Right lobe of liver (tissue), 6 donors: ENCODE measurements at regions of chr17 and their contacts with region 1.

Region 1: DNA sequence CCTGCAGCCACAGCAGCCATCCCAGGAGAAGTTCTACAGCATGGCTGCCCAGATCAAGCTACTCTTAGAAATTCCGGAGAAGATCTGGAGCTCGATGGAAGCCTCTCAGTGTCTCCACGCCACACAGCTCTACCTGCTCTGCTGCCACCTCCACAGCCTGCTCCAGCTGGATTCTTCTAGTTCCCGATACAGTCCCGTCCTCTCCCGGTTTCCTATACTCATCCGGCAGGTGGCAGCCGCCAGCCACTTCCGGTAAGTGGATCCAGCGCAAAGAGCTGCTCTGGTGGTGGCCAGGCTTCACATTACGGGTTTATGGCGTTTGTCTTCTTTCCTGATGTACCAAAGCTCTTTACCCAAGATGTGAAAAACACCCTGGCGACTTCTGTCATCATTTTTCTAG is 3.6 kb downstream of the COG1 start:
- DNase-seq: peak; percentile 49 to 71 (median 65)
- ATAC-seq: peak; percentile 14 to 37 (median 30)
- H3K4me3 ChIP-seq: no peak overlapping the region
- H3K27ac ChIP-seq: peak overlapping the region in 1 of 3 donors; percentile 19
- H3K4me1 ChIP-seq: peaks cover 0 to 25% (median 11%) of the 10 kb centered on the region in 4 donors
- H3K27me3 ChIP-seq: no peaks in the 10 kb centered on the region
- CTCF ChIP-seq: peak; percentile 22 to 45 (median 26)
- POLR2A ChIP-seq: no peak

Region 2: DNA sequence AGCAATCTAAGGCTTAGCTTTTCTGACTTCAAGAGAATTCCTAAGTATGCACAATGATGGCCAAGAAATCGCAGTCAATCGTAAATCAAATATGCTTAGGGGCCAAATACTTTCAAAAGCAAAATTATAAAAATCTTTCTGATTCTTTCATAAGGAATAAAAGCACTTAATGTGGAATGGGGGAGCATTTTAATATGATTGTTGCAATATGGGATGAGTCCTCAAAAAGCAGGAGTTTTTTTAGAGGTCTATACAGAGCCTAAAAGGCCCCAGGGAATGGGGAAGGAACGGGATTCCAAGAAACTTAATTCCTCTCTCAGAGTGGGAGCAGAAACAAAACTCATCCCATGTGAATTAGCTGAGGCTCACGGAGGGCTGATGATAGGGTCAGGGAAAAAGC is 89.3 kb before region 1 on chr17:
- intact Hi-C with region 1: no loop called
- DNase-seq: no peak
- ATAC-seq: no peak
- H3K4me3 ChIP-seq: no peak overlapping the region
- H3K27ac ChIP-seq: no peak overlapping the region
- H3K4me1 ChIP-seq: no peaks in the 10 kb centered on the region
- H3K27me3 ChIP-seq: no peaks in the 10 kb centered on the region
- CTCF ChIP-seq: no peak
- POLR2A ChIP-seq: no peak

Region 3: GRCh38 chr17:73126716-73127473 is 69.6 kb before region 1 on chr17:
- intact Hi-C with region 1: no loop called
- DNase-seq: no peak
- ATAC-seq: no peak
- H3K4me3 ChIP-seq: no peak overlapping the region
- H3K27ac ChIP-seq: no peak overlapping the region
- H3K4me1 ChIP-seq: no peaks in the 10 kb centered on the region
- H3K27me3 ChIP-seq: no peaks in the 10 kb centered on the region
- CTCF ChIP-seq: peak in 1 of 4 donors; percentile 5
- POLR2A ChIP-seq: no peak

Region 4: DNA sequence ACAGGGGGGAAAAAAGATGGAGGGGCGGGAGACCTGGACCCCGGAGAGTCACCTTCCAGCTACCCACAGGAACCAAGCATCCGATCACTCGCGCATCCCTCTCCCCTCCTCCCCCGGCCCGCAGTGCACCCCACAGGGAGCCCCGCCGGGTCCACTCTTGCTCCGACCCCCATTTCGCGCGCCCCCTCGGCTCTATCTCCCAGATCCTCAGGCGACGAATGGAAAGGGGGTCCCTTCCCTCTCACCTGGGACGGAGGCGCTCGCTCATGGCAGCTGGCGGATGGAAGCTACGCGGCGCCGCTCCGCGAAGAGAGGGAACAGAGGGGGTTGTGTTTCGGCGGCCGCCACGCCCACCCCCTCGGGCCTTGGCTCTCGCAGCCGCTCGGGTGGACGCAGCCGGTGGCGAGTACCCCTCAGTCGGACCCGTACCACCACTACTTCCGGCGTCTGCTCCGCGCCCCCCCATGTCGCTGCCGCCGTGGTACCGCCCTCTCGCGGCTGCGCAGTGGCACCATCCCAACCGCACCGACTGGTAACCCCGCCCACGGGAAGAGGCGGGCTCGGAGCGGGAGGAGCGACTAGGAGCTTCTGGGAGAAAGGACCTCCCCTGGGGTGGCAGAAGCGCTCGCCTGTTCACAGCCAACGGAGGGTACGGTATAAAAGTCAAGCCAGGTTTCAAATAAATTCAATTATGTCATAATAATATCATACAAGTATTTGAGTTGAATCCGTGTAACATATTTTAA is 35.5 kb after region 1 on chr17:
- intact Hi-C with region 1: loop called in 1 of 2 experiments (anchors 5 kb)
- DNase-seq: peak; percentile 98
- ATAC-seq: peak; percentile 95 to 98 (median 98)
- H3K4me3 ChIP-seq: peak overlapping the region; percentile 85 to 99 (median 98)
- H3K27ac ChIP-seq: peak overlapping the region; percentile 68 to 80 (median 76)
- H3K4me1 ChIP-seq: peaks cover 0 to 26% (median 12%) of the 10 kb centered on the region in 4 donors
- H3K27me3 ChIP-seq: no peaks in the 10 kb centered on the region
- CTCF ChIP-seq: peak in 3 of 4 donors; percentile 24 to 49 (median 31)
- POLR2A ChIP-seq: peak; percentile 83

Region 5: DNA sequence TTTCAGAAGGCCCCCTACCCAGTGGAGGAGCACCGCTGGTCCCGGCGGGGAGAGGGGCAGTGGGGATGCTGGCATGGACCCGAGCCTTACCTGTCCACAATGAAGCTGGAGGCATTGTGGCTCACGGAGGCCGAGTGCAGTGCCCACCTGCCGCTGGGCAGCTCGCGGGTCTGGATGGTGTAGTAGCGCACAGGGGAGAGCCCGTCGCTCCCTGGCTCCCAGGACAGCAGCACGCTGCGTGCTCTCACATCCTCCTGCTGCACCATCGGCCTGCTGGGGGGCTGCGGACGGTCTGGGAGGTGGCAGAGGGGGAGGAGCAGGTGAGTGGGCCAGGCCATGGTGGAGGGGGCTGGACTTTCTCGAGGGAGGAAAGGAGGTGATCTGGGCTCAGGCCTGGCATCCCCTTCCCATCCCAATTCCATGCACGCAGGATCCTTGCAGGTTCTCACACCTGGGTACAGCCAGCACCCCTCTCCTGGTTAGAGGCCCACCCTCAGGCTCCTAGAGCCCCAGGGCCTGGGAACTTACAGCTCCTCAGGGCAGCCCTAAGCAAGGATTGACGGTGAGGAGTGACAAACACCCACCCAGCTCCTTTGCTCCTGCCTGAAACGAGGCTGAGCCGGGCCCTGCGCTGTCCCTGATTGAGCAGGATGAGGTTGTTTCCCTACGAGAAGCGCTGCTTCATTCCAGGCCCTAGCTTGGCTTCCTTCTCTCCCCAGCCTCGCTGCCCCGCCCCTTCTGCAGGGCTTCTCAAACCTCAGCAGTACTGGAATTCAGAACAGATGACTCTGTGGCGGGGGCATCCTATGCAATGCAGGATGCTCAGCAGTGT is 191.5 kb after region 1 on chr17:
- intact Hi-C with region 1: no loop called
- DNase-seq: peak in 1 of 3 donors; percentile 20
- ATAC-seq: no peak
- H3K4me3 ChIP-seq: no peak overlapping the region
- H3K27ac ChIP-seq: no peak overlapping the region
- H3K4me1 ChIP-seq: no peaks in the 10 kb centered on the region
- H3K27me3 ChIP-seq: no peaks in the 10 kb centered on the region
- CTCF ChIP-seq: no peak
- POLR2A ChIP-seq: no peak